GM12878 (cell line): ENCODE measurements at regions of chr1 and their contacts with region 1.

Region 1: DNA sequence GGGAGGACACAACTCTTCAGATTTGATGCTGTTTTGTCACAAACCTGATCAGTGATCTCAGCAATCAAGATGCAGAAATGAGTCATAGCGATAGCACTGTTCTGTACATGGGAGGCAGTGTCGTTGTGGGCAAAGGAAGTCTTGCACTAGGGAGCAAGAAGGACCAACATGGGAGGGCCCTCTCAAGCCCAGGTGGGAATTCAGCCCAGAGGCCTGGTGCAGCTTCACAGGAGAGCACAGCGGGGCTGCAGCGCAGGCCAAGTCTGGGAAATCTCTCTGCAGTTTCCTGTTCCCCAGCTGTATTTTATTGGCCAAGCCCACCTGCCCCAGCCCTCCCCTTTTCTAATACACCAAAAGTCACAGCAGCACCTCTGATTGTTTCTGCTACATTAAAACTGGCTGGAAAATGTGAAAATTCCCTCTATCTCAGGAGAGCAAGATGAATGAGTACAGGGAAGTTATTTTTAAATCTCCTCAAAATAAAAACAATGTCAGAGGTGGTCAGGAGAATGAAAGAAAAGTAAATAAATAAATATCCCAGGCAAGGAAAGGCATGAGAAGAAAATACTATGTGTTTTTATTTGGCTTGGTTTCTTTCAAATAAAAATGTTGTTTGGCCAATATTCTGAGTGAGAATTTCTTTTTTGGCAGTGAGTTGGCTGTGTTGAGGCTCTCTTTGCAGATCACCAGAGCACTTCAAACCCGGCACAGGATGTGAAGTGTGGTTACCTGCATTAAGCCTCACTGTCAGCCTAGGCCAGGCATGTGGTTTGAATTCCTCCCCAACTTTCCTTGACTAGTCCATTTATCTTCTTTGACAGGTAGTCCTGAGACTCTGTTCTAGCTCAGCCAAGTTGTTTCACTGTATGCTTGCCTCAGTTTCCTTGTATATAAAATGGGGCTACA is 422.1 kb downstream of the PLPP3 start:
- DNase-seq: no peak
- ATAC-seq: peak; percentile 86
- H3K4me3 ChIP-seq: no peak overlapping the region
- H3K27ac ChIP-seq: no peak overlapping the region
- H3K4me1 ChIP-seq: no peaks in the 10 kb centered on the region
- H3K27me3 ChIP-seq: no peaks in the 10 kb centered on the region
- CTCF ChIP-seq: no peak
- EP300 ChIP-seq: no peak
- POLR2A ChIP-seq: no peak
- RAD21 ChIP-seq: no peak

Region 2: GRCh38 chr1:56146449-56146848 is 10.8 kb before region 1 on chr1:
- CTCF ChIA-PET with region 1: interaction called, 4 read pairs
- POLR2A ChIA-PET with region 1: interaction called, 4 read pairs
- RAD21 ChIA-PET with region 1: interaction called, 7 read pairs
- SMC1A ChIA-PET with region 1: interaction called, 14 read pairs
- in situ Hi-C with region 1: no loop called
- intact Hi-C with region 1: no loop called
- DNase-seq: no peak
- ATAC-seq: no peak
- H3K4me3 ChIP-seq: no peak overlapping the region
- H3K27ac ChIP-seq: no peak overlapping the region
- H3K4me1 ChIP-seq: no peaks in the 10 kb centered on the region
- H3K27me3 ChIP-seq: no peaks in the 10 kb centered on the region
- CTCF ChIP-seq: no peak
- EP300 ChIP-seq: no peak
- POLR2A ChIP-seq: no peak
- RAD21 ChIP-seq: no peak

Region 3: GRCh38 chr1:56169856-56170255 is 12.6 kb after region 1 on chr1:
- CTCF ChIA-PET with region 1: interaction called, 6 read pairs
- POLR2A ChIA-PET with region 1: interaction called, 3 read pairs
- RAD21 ChIA-PET with region 1: interaction called, 9 read pairs
- SMC1A ChIA-PET with region 1: interaction called, 28 read pairs
- in situ Hi-C with region 1: no loop called
- intact Hi-C with region 1: no loop called
- DNase-seq: no peak
- ATAC-seq: no peak
- H3K4me3 ChIP-seq: no peak overlapping the region
- H3K27ac ChIP-seq: no peak overlapping the region
- H3K4me1 ChIP-seq: no peaks in the 10 kb centered on the region
- H3K27me3 ChIP-seq: no peaks in the 10 kb centered on the region
- CTCF ChIP-seq: no peak
- EP300 ChIP-seq: no peak
- POLR2A ChIP-seq: no peak
- RAD21 ChIP-seq: no peak

Region 4: DNA sequence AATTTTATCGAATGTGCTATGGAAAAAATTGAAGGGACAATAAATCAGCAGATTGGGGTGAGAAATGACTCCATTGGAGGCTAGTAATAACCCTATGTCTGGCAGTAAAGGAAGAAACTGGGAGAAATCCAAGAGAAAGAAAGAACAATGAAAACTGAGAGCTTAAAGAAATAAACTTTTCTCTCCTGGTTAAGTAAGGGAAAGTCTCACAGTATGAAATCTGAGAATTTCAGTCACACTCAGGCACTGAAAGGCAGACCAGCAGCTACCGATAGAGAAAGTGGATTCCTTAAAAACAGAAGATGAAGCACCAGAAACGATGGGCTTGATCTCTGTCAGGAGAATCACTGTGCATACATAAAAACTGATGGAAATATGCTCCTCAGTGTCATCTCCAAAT is 18.0 kb after region 1 on chr1:
- CTCF ChIA-PET with region 1: interaction called, 6 read pairs
- POLR2A ChIA-PET with region 1: no interaction called
- RAD21 ChIA-PET with region 1: interaction called, 9 read pairs
- SMC1A ChIA-PET with region 1: interaction called, 28 read pairs
- in situ Hi-C with region 1: no loop called
- intact Hi-C with region 1: no loop called
- DNase-seq: no peak
- ATAC-seq: no peak
- H3K4me3 ChIP-seq: no peak overlapping the region
- H3K27ac ChIP-seq: no peak overlapping the region
- H3K4me1 ChIP-seq: no peaks in the 10 kb centered on the region
- H3K27me3 ChIP-seq: no peaks in the 10 kb centered on the region; a peak in 1 of 4 replicates
- CTCF ChIP-seq: no peak
- EP300 ChIP-seq: no peak
- POLR2A ChIP-seq: no peak
- RAD21 ChIP-seq: no peak